Activated CD4-positive, alpha-beta memory T cell treated with anti-CD3 and anti-CD28 coated beads for 36 hours (primary cell): ENCODE measurements at regions of chr21 and their contacts with region 1.

Region 1: DNA sequence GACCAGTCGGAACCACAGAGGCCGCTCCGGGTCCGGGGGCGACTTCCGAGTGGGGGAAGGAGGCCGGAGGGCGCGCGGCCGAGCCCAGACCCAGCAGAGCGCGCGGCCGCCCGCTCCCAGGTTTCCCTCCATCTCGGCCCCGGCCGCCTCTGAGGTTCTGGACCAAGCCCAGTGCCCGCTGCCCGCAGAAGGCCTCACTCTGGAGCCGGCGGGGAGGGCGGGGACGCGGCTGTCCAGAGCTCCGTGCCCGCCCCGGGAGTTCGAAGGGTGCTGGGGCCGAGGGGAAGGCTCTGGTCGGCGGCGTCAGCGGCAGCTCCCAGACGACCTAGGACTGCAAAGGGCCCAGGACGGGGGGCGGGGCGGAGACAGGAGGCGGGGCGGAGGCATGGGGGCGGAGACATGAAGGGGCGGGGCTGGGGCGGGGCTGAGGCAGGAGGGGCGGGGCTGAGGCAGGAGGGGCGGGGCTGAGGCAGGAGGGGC is 48.0 kb upstream of the SLC19A1 start:
- DNase-seq: peak; percentile 84
- H3K4me3 Mint-ChIP-seq: peak overlapping the region; percentile 52
- H3K27ac Mint-ChIP-seq: no peak overlapping the region
- H3K4me1 Mint-ChIP-seq: peaks cover 16% of the 10 kb centered on the region
- H3K27me3 Mint-ChIP-seq: peaks cover 17% of the 10 kb centered on the region

Region 2: GRCh38 chr21:45478115-45478801 is 112.0 kb before region 1 on chr21:
- CTCF ChIA-PET with region 1: no interaction called
- POLR2A ChIA-PET with region 1: no interaction called
- intact Hi-C with region 1: loop called (anchors 2 kb)
- DNase-seq: peak; percentile 86
- H3K4me3 Mint-ChIP-seq: peak overlapping the region; percentile 78
- H3K27ac Mint-ChIP-seq: peak overlapping the region; percentile 90
- H3K4me1 Mint-ChIP-seq: peaks cover 24% of the 10 kb centered on the region
- H3K27me3 Mint-ChIP-seq: no peaks in the 10 kb centered on the region

Region 3: GRCh38 chr21:45615145-45615711 is 24.9 kb after region 1 on chr21:
- CTCF ChIA-PET with region 1: no interaction called
- POLR2A ChIA-PET with region 1: no interaction called
- intact Hi-C with region 1: loop called (anchors 2 kb)
- DNase-seq: peak; percentile 90
- H3K4me3 Mint-ChIP-seq: peak overlapping the region; percentile 71
- H3K27ac Mint-ChIP-seq: peak overlapping the region; percentile 34
- H3K4me1 Mint-ChIP-seq: peaks cover 25% of the 10 kb centered on the region
- H3K27me3 Mint-ChIP-seq: no peaks in the 10 kb centered on the region

Region 4: GRCh38 chr21:45698493-45699184 is 108.4 kb after region 1 on chr21:
- CTCF ChIA-PET with region 1: no interaction called
- POLR2A ChIA-PET with region 1: no interaction called
- intact Hi-C with region 1: loop called (anchors 2 kb)
- DNase-seq: peak; percentile 44
- H3K4me3 Mint-ChIP-seq: no peak overlapping the region
- H3K27ac Mint-ChIP-seq: peak overlapping the region; percentile 59
- H3K4me1 Mint-ChIP-seq: peaks cover 19% of the 10 kb centered on the region
- H3K27me3 Mint-ChIP-seq: no peaks in the 10 kb centered on the region